ENCODE measurements at regions of chr10 and their contacts with region 1.

Region 1: DNA sequence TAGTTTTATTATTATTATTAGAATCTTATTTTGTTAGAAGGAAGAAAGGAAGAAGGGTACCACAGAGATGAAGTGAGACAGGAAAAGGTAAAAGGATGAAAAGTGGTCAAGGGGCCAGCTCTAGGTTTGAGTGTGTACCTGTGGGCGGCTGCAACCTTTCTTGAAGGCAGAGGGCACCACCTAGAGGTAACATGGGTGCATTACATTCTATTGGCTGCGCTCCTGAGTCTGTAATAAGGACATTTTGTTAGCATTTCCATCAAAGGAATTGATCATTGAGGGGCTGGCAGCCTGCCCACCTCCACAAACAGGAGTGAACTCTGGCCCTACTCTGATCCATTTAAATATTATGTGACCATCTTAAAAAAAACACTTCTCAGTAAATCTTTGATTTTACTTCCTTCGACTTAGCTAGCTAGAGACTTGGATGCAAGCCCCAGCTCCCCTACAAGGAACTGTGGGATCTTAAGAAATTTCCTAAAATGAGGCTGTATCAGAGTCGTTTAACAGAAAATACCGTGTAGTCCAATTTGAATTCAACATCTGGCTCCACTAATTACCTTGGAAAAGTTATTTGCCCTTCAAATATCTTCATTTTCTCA is 610.4 kb downstream of the IPMK start:
- DNase-seq: peak; percentile 47
- H3K4me3 ChIP-seq: no peak overlapping the region; a peak in 1 of 4 replicates
- H3K27ac ChIP-seq: no peak overlapping the region
- H3K4me1 ChIP-seq: no peaks in the 10 kb centered on the region
- H3K27me3 ChIP-seq: 0 out of 2 replicates have a peak, but pooled peaks cover 5% of the 10 kb centered on the region
- CTCF ChIP-seq: peak; percentile 86
- EP300 ChIP-seq: no peak
- RAD21 ChIP-seq: peak; percentile 88

Region 2: DNA sequence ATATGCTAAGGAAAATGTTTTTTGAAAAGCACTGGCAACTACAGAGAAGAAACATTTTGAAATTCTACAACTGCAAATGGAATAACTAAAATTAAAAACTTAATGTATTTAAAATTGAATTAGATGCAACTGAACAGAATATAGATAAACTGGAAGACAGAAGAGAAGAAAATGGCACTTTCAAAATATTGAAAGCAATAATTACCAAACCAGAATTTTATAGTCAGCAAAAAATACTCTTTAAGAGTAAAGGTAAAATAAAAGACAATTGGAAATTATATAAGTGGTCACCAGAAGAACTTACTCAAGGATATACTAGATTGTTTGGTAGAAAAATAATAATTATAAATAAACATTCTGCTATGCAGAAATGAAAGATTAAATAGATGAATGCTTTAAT is 368.5 kb before region 1 on chr10:
- CTCF ChIA-PET with region 1: no interaction called
- POLR2A ChIA-PET with region 1: no interaction called
- DNase-seq: no peak
- H3K4me3 ChIP-seq: no peak overlapping the region
- H3K27ac ChIP-seq: no peak overlapping the region
- H3K4me1 ChIP-seq: no peaks in the 10 kb centered on the region
- H3K27me3 ChIP-seq: no peaks in the 10 kb centered on the region
- CTCF ChIP-seq: no peak
- EP300 ChIP-seq: no peak
- RAD21 ChIP-seq: no peak

Region 3: GRCh38 chr10:57338823-57339558 is 318.3 kb before region 1 on chr10:
- CTCF ChIA-PET with region 1: interaction called, 58 read pairs
- POLR2A ChIA-PET with region 1: no interaction called
- DNase-seq: peak; percentile 52
- H3K4me3 ChIP-seq: no peak overlapping the region
- H3K27ac ChIP-seq: no peak overlapping the region
- H3K4me1 ChIP-seq: no peaks in the 10 kb centered on the region
- H3K27me3 ChIP-seq: no peaks in the 10 kb centered on the region
- CTCF ChIP-seq: peak; percentile 89
- EP300 ChIP-seq: no peak
- RAD21 ChIP-seq: peak; percentile 74

Region 4: GRCh38 chr10:57579926-57580325 is 77.3 kb before region 1 on chr10:
- CTCF ChIA-PET with region 1: interaction called, 42 read pairs
- POLR2A ChIA-PET with region 1: no interaction called
- DNase-seq: peak; percentile 10
- H3K4me3 ChIP-seq: no peak overlapping the region
- H3K27ac ChIP-seq: no peak overlapping the region
- H3K4me1 ChIP-seq: no peaks in the 10 kb centered on the region
- H3K27me3 ChIP-seq: no peaks in the 10 kb centered on the region
- CTCF ChIP-seq: peak; percentile 60
- EP300 ChIP-seq: no peak
- RAD21 ChIP-seq: peak; percentile 70

Region 5: GRCh38 chr10:57638411-57638810 is 18.9 kb before region 1 on chr10:
- CTCF ChIA-PET with region 1: interaction called, 28 read pairs
- POLR2A ChIA-PET with region 1: no interaction called
- DNase-seq: no peak
- H3K4me3 ChIP-seq: no peak overlapping the region
- H3K27ac ChIP-seq: no peak overlapping the region
- H3K4me1 ChIP-seq: no peaks in the 10 kb centered on the region
- H3K27me3 ChIP-seq: no peaks in the 10 kb centered on the region
- CTCF ChIP-seq: no peak
- EP300 ChIP-seq: no peak
- RAD21 ChIP-seq: no peak

Region 6: DNA sequence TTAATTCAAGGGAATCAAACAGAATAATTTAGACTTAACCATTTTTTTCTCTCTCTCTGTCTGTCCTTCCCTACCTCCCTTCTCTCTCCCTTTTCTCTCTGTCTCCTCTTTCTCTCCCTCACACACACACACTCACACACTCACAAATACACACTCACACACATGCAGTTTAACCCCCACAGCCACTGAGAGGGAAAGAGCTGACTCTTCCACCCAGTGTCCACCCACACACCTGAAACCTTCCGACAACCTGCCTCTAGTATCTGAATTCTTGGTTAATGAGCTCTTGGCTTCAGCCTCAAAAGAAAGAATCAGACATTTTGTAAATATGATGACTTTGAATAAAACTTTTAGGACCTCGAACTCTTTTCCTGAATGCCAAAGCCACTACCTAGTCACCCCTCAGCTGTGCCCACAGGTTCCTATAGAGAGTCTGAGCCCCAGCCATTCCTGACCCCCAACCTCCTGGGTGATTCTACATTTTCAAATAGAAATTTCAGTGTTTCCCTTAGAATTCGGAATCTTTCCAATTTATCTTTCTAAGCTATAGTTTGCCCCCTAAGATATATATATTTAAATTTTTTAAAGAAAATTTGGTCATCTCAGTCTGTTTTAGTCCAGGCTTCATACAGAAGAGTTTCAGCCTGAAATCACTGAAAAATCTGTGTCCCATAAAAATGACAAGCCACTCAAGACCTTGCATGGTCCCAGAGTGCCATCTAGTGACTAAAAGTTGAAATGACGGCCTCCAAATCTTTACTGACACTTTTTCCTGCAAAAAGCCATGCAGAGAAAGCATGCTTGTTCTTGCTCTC is 407.7 kb after region 1 on chr10:
- CTCF ChIA-PET with region 1: interaction called, 10 read pairs
- POLR2A ChIA-PET with region 1: no interaction called
- DNase-seq: peak; percentile 43
- H3K4me3 ChIP-seq: no peak overlapping the region
- H3K27ac ChIP-seq: no peak overlapping the region
- H3K4me1 ChIP-seq: no peaks in the 10 kb centered on the region; a peak in 1 of 4 replicates
- H3K27me3 ChIP-seq: no peaks in the 10 kb centered on the region; the same call in 1 of the 2 replicates
- CTCF ChIP-seq: peak; percentile 84
- EP300 ChIP-seq: no peak
- RAD21 ChIP-seq: peak; percentile 95

Region 7: GRCh38 chr10:58152673-58153263 is 495.5 kb after region 1 on chr10:
- CTCF ChIA-PET with region 1: interaction called, 25 read pairs
- POLR2A ChIA-PET with region 1: no interaction called
- DNase-seq: peak; percentile 41
- H3K4me3 ChIP-seq: no peak overlapping the region
- H3K27ac ChIP-seq: no peak overlapping the region
- H3K4me1 ChIP-seq: peaks cover 0 to 4% of the 10 kb centered on the region in 2 experiments; a peak in 1 of 4 replicates
- H3K27me3 ChIP-seq: no peaks in the 10 kb centered on the region
- CTCF ChIP-seq: peak; percentile 70
- EP300 ChIP-seq: no peak
- RAD21 ChIP-seq: peak; percentile 82